ENCODE measurements at regions of chr19 and their contacts with region 1.

Region 1: DNA sequence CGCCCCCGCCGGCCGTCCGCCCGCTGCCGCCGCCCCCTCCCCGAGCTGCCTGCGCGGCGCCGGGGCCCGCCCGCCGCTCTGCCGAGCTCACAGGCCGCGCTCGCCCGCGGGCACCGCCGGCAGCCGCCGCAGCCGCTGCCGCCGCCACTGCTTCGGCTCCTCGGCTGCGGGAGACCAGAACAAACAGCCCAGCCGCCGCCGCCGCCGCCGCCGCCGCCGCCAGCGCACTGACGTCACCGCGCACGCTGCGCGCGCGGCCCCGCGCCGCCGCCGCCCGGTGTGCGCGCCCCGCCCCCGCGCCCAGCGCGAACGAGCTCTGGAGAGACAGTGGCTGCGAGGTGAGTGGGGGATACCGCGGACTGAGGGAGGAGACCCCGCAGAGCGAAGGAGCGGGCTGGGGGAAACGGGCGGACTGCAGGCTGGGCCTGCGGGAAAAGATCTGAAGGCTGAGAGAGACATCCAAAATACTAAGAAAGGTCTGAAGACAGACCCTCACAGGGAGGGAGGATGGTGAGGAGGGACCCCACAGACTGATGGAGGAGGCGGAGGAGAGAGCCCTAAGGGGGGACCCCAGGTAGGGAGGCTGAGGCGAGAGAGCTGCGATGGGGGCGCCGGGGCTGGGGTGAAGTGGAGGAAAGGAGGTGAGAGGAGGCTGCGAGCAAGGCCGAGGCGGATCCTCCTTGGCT is at the start of gene BRD4:
- DNase-seq: peak; percentile 57 to 82
- H3K4me3 ChIP-seq: peak within 1 kb of the TSS; percentile 100
- H3K4me3 Mint-ChIP-seq: peak within 1 kb of the TSS; percentile 99
- H3K27ac Mint-ChIP-seq: peak within 1 kb of the TSS; percentile 94
- H3K4me1 ChIP-seq: peaks cover 28% of the 10 kb centered on the region
- H3K4me1 Mint-ChIP-seq: peaks cover 17% of the 10 kb centered on the region
- H3K27me3 ChIP-seq: no peaks in the 10 kb centered on the region
- H3K27me3 Mint-ChIP-seq: no peaks in the 10 kb centered on the region
- CTCF ChIP-seq: no peak
- total RNA-seq, gene BRD4: 154 and 170 TPM in 2 replicates

Region 2: GRCh38 chr19:15177269-15178116 is 155.0 kb before region 1 on chr19:
- CTCF ChIA-PET with region 1: interaction called, 11 read pairs
- POLR2A ChIA-PET with region 1: no interaction called
- intact Hi-C with region 1: no loop called
- DNase-seq: peak in 1 of 2 experiments; percentile 66
- H3K4me3 ChIP-seq: no peak overlapping the region
- H3K4me3 Mint-ChIP-seq: no peak overlapping the region
- H3K27ac Mint-ChIP-seq: no peak overlapping the region
- H3K4me1 ChIP-seq: no peaks in the 10 kb centered on the region
- H3K4me1 Mint-ChIP-seq: no peaks in the 10 kb centered on the region
- H3K27me3 ChIP-seq: no peaks in the 10 kb centered on the region
- H3K27me3 Mint-ChIP-seq: no peaks in the 10 kb centered on the region
- CTCF ChIP-seq: peak; percentile 43 to 70

Region 3: DNA sequence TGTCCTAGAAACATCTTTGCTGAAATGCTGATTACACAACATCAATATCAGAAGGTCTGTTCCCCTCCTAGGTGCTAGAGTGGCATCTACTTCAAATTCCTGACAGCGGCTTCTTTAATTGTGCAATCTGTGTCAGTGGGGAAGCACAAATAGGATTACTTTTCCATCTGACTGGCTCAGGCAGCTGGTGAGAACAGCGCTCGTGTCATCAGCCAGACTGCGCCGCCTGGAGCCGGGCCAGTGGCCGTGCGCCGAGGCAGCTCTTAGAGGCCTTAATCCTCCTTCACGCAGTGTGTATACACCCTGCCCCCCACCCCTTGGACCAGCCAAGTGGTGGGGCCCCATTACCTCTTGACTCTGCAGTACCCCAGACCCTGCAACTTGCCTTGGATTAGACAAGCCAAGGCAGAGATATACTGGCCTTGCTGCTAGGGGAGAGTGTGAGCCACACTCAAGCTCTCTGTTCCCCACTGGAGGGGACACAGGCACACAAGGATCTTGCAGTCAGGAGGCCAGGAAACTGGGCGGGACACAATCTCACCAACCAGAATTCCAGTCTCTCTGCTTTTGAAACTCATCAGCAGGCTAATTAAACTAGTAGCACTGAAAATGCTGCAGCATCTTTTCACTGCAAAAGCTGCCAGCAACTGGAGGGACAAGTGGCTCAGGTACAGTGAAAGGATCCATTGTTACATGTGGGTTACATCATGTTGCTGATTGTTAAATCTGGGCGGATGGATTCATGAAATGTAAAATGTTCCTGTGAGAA is 51.4 kb before region 1 on chr19:
- CTCF ChIA-PET with region 1: no interaction called
- POLR2A ChIA-PET with region 1: no interaction called
- intact Hi-C with region 1: loop called (anchors 5 kb)
- DNase-seq: peak; percentile 54 to 69
- H3K4me3 ChIP-seq: no peak overlapping the region
- H3K4me3 Mint-ChIP-seq: peak overlapping the region; percentile 53
- H3K27ac Mint-ChIP-seq: peak overlapping the region; percentile 89
- H3K4me1 ChIP-seq: peaks cover 63% of the 10 kb centered on the region
- H3K4me1 Mint-ChIP-seq: peaks cover 54% of the 10 kb centered on the region
- H3K27me3 ChIP-seq: no peaks in the 10 kb centered on the region
- H3K27me3 Mint-ChIP-seq: no peaks in the 10 kb centered on the region
- CTCF ChIP-seq: no peak

Region 4: DNA sequence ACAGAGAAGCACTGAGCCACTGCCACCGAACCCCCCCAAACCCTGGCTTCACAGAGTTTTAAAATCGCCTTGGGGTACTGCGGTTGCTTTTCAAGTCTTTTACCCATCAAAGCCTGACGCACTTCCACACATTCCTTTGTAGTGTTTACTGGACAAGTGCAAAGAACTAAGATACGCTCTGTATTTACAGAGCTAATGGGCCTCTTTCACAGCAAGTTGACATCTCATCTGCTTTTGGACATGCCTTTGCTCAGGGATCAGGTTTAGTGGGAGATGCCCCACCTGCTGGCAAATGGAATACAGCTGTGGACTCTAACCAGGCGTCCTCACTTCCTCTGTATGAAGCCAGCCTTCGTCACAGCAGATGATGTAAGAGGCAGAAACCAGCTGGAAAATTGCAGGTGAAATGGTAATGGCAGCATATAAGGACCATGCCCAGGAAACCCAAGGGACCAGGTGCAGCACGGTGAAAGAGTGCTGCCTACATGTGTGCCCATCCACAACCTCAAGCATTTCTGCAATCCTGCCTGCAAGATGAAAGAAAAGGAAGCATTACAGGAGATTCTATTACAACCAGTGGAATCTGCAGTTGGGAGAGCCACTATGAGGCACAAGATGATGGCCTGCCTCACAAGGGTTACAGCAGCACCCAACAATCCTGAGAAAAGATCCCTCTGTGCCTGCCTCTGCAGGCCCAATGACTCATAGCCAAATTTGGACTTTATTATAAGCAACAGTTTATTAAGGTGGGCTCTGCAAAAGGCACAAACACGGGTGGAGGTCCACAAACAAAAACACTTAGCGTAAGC is 34.8 kb before region 1 on chr19:
- CTCF ChIA-PET with region 1: no interaction called
- POLR2A ChIA-PET with region 1: interaction called, 6 read pairs
- intact Hi-C with region 1: loop called (anchors 2 kb)
- DNase-seq: peak; percentile 91 to 93
- H3K4me3 ChIP-seq: no peak overlapping the region
- H3K4me3 Mint-ChIP-seq: peak overlapping the region; percentile 48
- H3K27ac Mint-ChIP-seq: peak overlapping the region; percentile 97
- H3K4me1 ChIP-seq: peaks cover 60% of the 10 kb centered on the region
- H3K4me1 Mint-ChIP-seq: peaks cover 49% of the 10 kb centered on the region
- H3K27me3 ChIP-seq: no peaks in the 10 kb centered on the region
- H3K27me3 Mint-ChIP-seq: no peaks in the 10 kb centered on the region
- CTCF ChIP-seq: peak; percentile 27 to 53

Region 5: GRCh38 chr19:15379083-15379995 is 46.9 kb after region 1 on chr19 and contains the start of gene AKAP8:
- CTCF ChIA-PET with region 1: no interaction called
- POLR2A ChIA-PET with region 1: interaction called, 6 read pairs
- intact Hi-C with region 1: loop called (anchors 5 kb)
- DNase-seq: peak; percentile 97 to 98
- H3K4me3 ChIP-seq: peak within 1 kb of the TSS; percentile 98
- H3K4me3 Mint-ChIP-seq: peak within 1 kb of the TSS; percentile 86
- H3K27ac Mint-ChIP-seq: peak within 1 kb of the TSS; percentile 100
- H3K4me1 ChIP-seq: peaks cover 18% of the 10 kb centered on the region
- H3K4me1 Mint-ChIP-seq: peaks cover 16% of the 10 kb centered on the region
- H3K27me3 ChIP-seq: no peaks in the 10 kb centered on the region
- H3K27me3 Mint-ChIP-seq: no peaks in the 10 kb centered on the region
- CTCF ChIP-seq: no peak
- total RNA-seq, gene AKAP8: 53.5 and 53.7 TPM in 2 replicates